GM12878 (cell line): ENCODE measurements at regions of chr21 and their contacts with region 1.

Region 1: GRCh38 chr21:32994305-32994704 is 31.4 kb upstream of the OLIG2 start:
- DNase-seq: no peak
- ATAC-seq: peak; percentile 38; the same call in 1 of the 3 replicates
- H3K4me3 ChIP-seq: no peak overlapping the region
- H3K27ac ChIP-seq: no peak overlapping the region
- H3K4me1 ChIP-seq: no peaks in the 10 kb centered on the region
- H3K27me3 ChIP-seq: peaks cover 0 to 2% of the 10 kb centered on the region in 2 experiments; a peak in 3 of 4 replicates
- CTCF ChIP-seq: peak; percentile 16 to 35 (median 23); a peak in 3 of 6 replicates
- EP300 ChIP-seq: no peak
- POLR2A ChIP-seq: no peak
- RAD21 ChIP-seq: peak; percentile 39; the same call in 1 of the 2 replicates

Region 2: GRCh38 chr21:33117101-33117888 is 123.0 kb after region 1 on chr21:
- CTCF ChIA-PET with region 1: interaction called, 12 read pairs
- POLR2A ChIA-PET with region 1: no interaction called
- RAD21 ChIA-PET with region 1: no interaction called
- SMC1A ChIA-PET with region 1: interaction called, 4 read pairs
- in situ Hi-C with region 1: no loop called
- intact Hi-C with region 1: no loop called
- DNase-seq: no peak
- ATAC-seq: no peak
- H3K4me3 ChIP-seq: no peak overlapping the region
- H3K27ac ChIP-seq: no peak overlapping the region
- H3K4me1 ChIP-seq: no peaks in the 10 kb centered on the region
- H3K27me3 ChIP-seq: peaks cover 2 to 5% of the 10 kb centered on the region in 2 experiments
- CTCF ChIP-seq: no peak
- EP300 ChIP-seq: no peak
- POLR2A ChIP-seq: no peak
- RAD21 ChIP-seq: no peak

Region 3: DNA sequence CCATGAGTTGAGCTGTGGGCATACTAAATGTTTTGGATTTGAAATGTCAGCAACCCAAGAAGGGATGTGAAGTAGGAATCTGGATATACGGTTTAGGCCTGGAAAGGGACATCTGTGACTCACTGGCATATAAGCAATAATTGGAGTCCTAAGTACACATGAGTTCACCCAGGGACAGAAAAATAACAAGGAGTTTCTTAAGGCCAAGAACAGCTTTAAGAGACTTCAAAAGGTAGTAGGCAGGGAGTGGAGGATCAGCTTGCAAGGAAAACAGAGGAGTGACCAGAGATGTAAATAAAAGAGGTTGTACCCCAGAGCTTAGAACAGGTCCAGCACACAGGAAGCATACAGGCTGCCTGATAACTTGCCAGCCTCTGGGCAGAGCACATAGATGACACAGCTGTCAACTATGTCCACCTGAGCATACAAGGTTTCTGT is 457.3 kb after region 1 on chr21:
- CTCF ChIA-PET with region 1: no interaction called
- POLR2A ChIA-PET with region 1: no interaction called
- RAD21 ChIA-PET with region 1: no interaction called
- SMC1A ChIA-PET with region 1: interaction called, 3 read pairs
- in situ Hi-C with region 1: no loop called
- intact Hi-C with region 1: loop called (anchors 5 kb)
- DNase-seq: no peak
- ATAC-seq: no peak
- H3K4me3 ChIP-seq: no peak overlapping the region
- H3K27ac ChIP-seq: no peak overlapping the region
- H3K4me1 ChIP-seq: no peaks in the 10 kb centered on the region
- H3K27me3 ChIP-seq: no peaks in the 10 kb centered on the region
- CTCF ChIP-seq: no peak
- EP300 ChIP-seq: no peak
- POLR2A ChIP-seq: no peak
- RAD21 ChIP-seq: no peak